GM10248 (cell line): ENCODE measurements at regions of chr4 and their contacts with region 1.

Region 1: DNA sequence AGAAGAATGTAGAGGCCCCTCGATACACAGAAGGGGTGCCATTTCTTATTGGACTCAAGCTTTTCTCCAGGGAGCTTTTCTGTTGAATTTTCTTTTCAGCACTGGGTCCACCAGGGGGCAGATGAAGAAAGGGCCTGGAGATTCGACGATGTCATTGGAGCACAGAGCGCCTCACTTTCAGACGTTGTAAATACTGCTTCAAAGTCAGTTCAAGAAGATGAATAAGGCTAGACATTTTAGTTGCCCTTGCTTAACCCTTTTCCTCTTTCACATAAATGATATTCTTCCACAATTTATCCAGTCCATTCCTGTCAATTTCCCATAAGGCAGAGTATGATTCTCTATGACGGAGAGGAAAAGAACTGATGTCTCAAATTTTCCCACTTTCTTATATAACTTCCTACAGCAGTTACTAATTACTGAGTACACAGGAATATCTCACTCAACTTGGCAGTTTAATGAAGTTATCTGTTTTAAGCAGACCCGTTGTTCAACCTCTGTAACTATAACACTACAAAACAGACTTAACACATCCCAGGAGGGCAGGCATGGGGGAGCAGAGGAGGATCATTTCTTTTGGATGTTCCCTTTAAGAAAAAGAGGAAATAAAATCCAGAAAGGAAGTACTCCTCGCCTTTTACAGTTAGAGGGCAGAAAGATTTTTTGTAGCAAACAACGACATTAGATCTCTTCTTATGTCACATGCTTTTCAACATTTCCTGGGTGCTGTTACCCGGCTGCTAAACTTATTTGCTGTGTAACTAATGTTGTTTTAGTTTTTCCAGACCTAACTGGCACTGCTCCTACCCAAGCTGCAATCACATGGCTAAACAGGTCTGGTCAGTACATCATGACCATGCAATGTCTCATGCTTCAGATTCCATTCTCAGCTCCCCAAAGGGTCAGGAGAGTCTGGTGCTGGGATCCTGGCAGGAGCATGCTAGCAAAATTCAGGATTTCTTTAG is 12.2 kb upstream of the CENPU start:
- DNase-seq: peak; percentile 82
- CTCF ChIP-seq: peak; percentile 73

Region 2: GRCh38 chr4:184733654-184734524 is 12.2 kb before region 1 on chr4 and contains the start of gene CENPU:
- CTCF ChIA-PET with region 1: interaction called, 32 read pairs
- POLR2A ChIA-PET with region 1: no interaction called
- DNase-seq: peak; percentile 100
- CTCF ChIP-seq: no peak

Region 3: DNA sequence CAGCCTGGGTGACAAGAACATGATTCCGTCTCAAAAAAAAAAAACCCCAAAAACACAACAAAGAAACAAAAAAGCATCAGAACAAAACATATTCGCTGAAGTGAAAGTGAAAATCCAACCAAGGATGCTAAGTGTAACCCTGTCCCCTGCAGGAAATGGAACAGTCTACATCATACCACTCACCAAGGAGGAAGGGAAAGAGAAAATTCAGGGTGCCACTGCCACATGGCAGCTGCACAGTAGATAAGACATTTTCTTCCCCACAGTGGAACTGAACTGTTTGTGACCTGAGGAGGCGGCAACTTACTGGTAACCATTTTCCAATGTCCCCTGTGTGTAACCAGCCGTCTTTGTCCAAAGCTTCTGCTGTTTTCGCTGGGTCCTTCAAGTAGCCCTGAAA is 16.0 kb after region 1 on chr4:
- CTCF ChIA-PET with region 1: interaction called, 11 read pairs
- POLR2A ChIA-PET with region 1: no interaction called
- DNase-seq: peak; percentile 53
- CTCF ChIP-seq: peak; percentile 10